CD8-positive, alpha-beta T cell (primary cell): ENCODE measurements at regions of chr15 and their contacts with region 1.

Region 1: GRCh38 chr15:26996250-26996649 is 25.3 kb downstream of the GABRG3 start:
- DNase-seq: no peak
- ATAC-seq: no peak
- H3K4me3 ChIP-seq: no peak overlapping the region
- H3K4me3 Mint-ChIP-seq: no peak overlapping the region
- H3K27ac ChIP-seq: no peak overlapping the region
- H3K27ac Mint-ChIP-seq: no peak overlapping the region
- H3K4me1 ChIP-seq: no peaks in the 10 kb centered on the region
- H3K4me1 Mint-ChIP-seq: no peaks in the 10 kb centered on the region
- H3K27me3 ChIP-seq: no peaks in the 10 kb centered on the region
- H3K27me3 Mint-ChIP-seq: no peaks in the 10 kb centered on the region
- CTCF ChIP-seq: no peak

Region 2: GRCh38 chr15:27017168-27017809 is 21.0 kb after region 1 on chr15:
- CTCF ChIA-PET with region 1: no interaction called
- POLR2A ChIA-PET with region 1: no interaction called
- intact Hi-C with region 1: no loop called
- DNase-seq: peak in 1 of 9 experiments; percentile 4
- ATAC-seq: no peak
- H3K4me3 ChIP-seq: no peak overlapping the region
- H3K4me3 Mint-ChIP-seq: no peak overlapping the region
- H3K27ac ChIP-seq: no peak overlapping the region
- H3K27ac Mint-ChIP-seq: no peak overlapping the region
- H3K4me1 ChIP-seq: no peaks in the 10 kb centered on the region
- H3K4me1 Mint-ChIP-seq: no peaks in the 10 kb centered on the region
- H3K27me3 ChIP-seq: no peaks in the 10 kb centered on the region
- H3K27me3 Mint-ChIP-seq: peaks cover 2% of the 10 kb centered on the region
- CTCF ChIP-seq: no peak

Region 3: DNA sequence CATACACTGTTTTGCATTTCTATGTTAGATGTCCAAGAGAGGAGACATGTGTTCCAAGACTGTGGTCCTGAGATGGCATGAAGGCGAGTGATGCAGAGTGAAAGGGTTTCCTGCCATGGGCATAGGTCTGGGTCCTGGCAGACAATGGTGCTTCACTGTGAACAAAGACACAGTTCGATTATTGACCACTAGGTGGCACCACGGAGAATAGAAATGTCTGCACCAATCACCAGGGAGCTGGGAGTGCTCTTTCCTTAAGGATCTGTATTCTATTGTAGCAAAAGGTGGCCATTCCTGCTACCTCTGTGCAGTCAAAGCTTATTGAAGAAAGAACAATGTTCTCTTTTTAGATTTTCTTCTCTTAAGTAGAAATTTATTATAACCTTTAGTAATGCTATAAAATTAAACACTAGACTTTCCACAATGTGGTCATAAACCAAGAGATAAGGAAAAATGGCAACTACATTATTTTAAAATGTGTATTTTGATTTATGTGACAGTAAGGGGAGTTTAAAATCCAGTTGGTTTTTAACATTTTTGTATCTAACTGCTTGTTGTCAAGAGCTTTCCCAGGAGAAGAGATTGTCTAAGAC is 63.5 kb after region 1 on chr15:
- CTCF ChIA-PET with region 1: no interaction called
- POLR2A ChIA-PET with region 1: no interaction called
- intact Hi-C with region 1: loop called in 1 of 2 experiments (anchors 10 kb)
- DNase-seq: no peak
- ATAC-seq: no peak
- H3K4me3 ChIP-seq: no peak overlapping the region
- H3K4me3 Mint-ChIP-seq: no peak overlapping the region
- H3K27ac ChIP-seq: no peak overlapping the region
- H3K27ac Mint-ChIP-seq: no peak overlapping the region
- H3K4me1 ChIP-seq: no peaks in the 10 kb centered on the region
- H3K4me1 Mint-ChIP-seq: no peaks in the 10 kb centered on the region
- H3K27me3 ChIP-seq: no peaks in the 10 kb centered on the region
- H3K27me3 Mint-ChIP-seq: no peaks in the 10 kb centered on the region
- CTCF ChIP-seq: no peak

Region 4: DNA sequence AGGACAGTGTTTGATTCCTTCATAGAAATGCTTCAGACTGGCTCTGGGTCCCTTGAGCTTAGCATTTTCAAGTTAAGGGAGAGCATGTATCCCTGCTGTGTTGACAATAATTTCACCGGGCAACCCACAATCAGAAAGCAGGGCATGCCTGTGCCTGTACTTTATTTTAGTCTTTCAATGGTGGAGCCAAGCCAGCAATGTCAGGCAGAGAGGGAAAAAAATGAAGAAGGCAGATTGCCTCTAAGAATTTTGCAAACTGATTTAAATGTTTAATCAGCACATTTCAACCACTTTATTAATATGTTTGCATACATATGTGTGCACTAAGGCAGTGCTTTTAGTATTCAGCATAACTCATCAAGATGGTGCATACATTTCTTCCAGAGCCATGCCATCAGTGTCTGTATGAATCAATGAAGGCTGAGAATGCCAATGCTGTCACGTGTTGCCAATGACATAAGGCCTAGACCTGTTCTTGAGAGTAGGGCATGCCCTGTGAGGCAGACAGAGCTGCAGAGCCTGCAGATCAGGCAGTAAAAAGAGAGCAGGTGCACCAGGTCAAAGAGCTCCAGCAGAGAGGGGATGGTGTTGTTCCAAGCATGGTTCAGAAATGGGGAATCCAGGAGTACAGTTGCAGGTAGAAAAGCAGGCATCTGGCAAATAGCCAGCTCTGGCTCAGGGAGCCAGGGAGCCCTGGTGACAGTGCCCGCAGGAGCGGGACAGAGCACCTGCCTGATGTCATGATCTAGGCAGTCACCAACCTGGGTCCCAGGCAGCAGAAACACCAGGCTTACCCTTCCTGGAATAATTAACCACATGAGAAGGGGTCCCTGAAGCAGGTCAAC is 483.3 kb after region 1 on chr15:
- CTCF ChIA-PET with region 1: no interaction called
- POLR2A ChIA-PET with region 1: no interaction called
- intact Hi-C with region 1: loop called in 1 of 2 experiments (anchors 5 kb)
- DNase-seq: no peak
- ATAC-seq: no peak
- H3K4me3 ChIP-seq: no peak overlapping the region
- H3K4me3 Mint-ChIP-seq: no peak overlapping the region
- H3K27ac ChIP-seq: no peak overlapping the region
- H3K27ac Mint-ChIP-seq: no peak overlapping the region
- H3K4me1 ChIP-seq: no peaks in the 10 kb centered on the region
- H3K4me1 Mint-ChIP-seq: no peaks in the 10 kb centered on the region
- H3K27me3 ChIP-seq: no peaks in the 10 kb centered on the region
- H3K27me3 Mint-ChIP-seq: no peaks in the 10 kb centered on the region
- CTCF ChIP-seq: no peak